Activated CD8-positive, alpha-beta T cell treated with anti-CD3 and anti-CD28 coated beads for 36 hours (primary cell): ENCODE measurements at regions of chr2 and their contacts with region 1.

Region 1: DNA sequence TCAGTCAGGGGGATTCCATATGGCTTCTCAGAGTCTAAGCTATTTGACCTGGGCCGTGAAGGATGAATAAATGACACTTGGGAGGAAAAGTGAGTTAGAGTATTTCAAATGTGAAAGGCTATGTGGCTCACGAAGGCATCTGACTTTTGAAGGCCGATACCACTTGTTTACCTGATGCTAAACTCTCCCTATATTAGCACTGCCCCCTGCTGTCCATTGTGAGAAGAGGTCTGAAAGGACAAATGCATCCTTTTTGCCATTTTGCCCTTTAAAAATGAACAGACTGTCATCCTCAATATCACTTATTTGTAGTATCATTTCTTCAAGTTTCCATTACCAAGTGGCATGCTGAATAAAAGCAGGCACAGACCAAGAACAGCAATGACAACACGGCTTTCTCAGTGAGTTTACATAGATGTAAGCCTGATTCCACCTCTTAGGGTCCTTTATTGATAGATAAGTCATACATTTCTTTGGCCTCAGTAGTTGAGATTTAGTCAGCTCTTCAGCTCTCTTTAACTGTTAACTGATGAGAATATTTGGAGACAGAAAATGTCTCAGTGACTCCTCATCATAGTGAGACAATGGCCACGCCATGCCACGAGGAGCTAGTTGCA is 40.1 kb downstream of the DOCK10 start:
- DNase-seq: peak; percentile 80
- ATAC-seq: peak; percentile 72
- H3K4me3 Mint-ChIP-seq: no peak overlapping the region
- H3K27ac Mint-ChIP-seq: peak overlapping the region; percentile 83
- H3K4me1 Mint-ChIP-seq: peaks cover 83% of the 10 kb centered on the region
- H3K27me3 Mint-ChIP-seq: no peaks in the 10 kb centered on the region
- CTCF ChIP-seq: peak; percentile 76

Region 2: GRCh38 chr2:224885836-224886547 is 116.2 kb before region 1 on chr2:
- CTCF ChIA-PET with region 1: interaction called, 3 read pairs
- POLR2A ChIA-PET with region 1: no interaction called
- intact Hi-C with region 1: loop called (anchors 5 kb)
- DNase-seq: no peak
- ATAC-seq: peak; percentile 70
- H3K4me3 Mint-ChIP-seq: no peak overlapping the region
- H3K27ac Mint-ChIP-seq: peak overlapping the region; percentile 67
- H3K4me1 Mint-ChIP-seq: peaks cover 69% of the 10 kb centered on the region
- H3K27me3 Mint-ChIP-seq: no peaks in the 10 kb centered on the region
- CTCF ChIP-seq: no peak

Region 3: GRCh38 chr2:224927646-224928173 is 74.4 kb before region 1 on chr2:
- CTCF ChIA-PET with region 1: interaction called, 26 read pairs
- POLR2A ChIA-PET with region 1: interaction called, 14 read pairs
- intact Hi-C with region 1: loop called (anchors 2 kb)
- DNase-seq: peak; percentile 88
- ATAC-seq: peak; percentile 64
- H3K4me3 Mint-ChIP-seq: peak overlapping the region; percentile 42
- H3K27ac Mint-ChIP-seq: peak overlapping the region; percentile 94
- H3K4me1 Mint-ChIP-seq: peaks cover 95% of the 10 kb centered on the region
- H3K27me3 Mint-ChIP-seq: no peaks in the 10 kb centered on the region
- CTCF ChIP-seq: no peak

Region 4: GRCh38 chr2:224938651-224939182 is 63.4 kb before region 1 on chr2:
- CTCF ChIA-PET with region 1: interaction called, 31 read pairs
- POLR2A ChIA-PET with region 1: interaction called, 9 read pairs
- intact Hi-C with region 1: no loop called
- DNase-seq: peak; percentile 71
- ATAC-seq: peak; percentile 79
- H3K4me3 Mint-ChIP-seq: peak overlapping the region; percentile 67
- H3K27ac Mint-ChIP-seq: peak overlapping the region; percentile 87
- H3K4me1 Mint-ChIP-seq: peaks cover 76% of the 10 kb centered on the region
- H3K27me3 Mint-ChIP-seq: no peaks in the 10 kb centered on the region
- CTCF ChIP-seq: no peak

Region 5: GRCh38 chr2:224982910-224983711 is 19.0 kb before region 1 on chr2:
- CTCF ChIA-PET with region 1: interaction called, 54 read pairs
- POLR2A ChIA-PET with region 1: interaction called, 4 read pairs
- intact Hi-C with region 1: no loop called
- DNase-seq: peak; percentile 59
- ATAC-seq: no peak
- H3K4me3 Mint-ChIP-seq: peak overlapping the region; percentile 59
- H3K27ac Mint-ChIP-seq: peak overlapping the region; percentile 89
- H3K4me1 Mint-ChIP-seq: peaks cover 85% of the 10 kb centered on the region
- H3K27me3 Mint-ChIP-seq: no peaks in the 10 kb centered on the region
- CTCF ChIP-seq: no peak

Region 6: DNA sequence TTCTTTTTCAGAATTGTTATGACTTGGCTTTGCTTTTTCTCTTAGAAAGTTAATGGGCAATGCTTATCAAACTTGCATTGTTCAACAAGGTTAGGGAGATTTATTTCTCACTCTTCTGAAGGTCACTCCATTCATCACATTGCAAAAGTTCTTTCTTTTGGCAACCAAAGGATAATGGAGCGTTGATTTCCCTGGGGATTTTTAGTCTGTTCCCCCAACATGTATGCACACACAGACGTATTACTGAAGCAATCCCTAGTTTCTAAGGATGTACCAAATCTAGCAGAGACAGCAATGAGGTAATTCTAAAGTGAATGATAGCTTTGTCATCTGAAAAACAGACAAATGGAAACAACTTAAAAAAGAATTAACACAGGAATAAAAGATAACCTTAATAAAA is 746.5 kb after region 1 on chr2:
- CTCF ChIA-PET with region 1: no interaction called
- POLR2A ChIA-PET with region 1: no interaction called
- intact Hi-C with region 1: no loop called
- DNase-seq: no peak
- ATAC-seq: no peak
- H3K4me3 Mint-ChIP-seq: no peak overlapping the region
- H3K27ac Mint-ChIP-seq: no peak overlapping the region
- H3K4me1 Mint-ChIP-seq: no peaks in the 10 kb centered on the region
- H3K27me3 Mint-ChIP-seq: no peaks in the 10 kb centered on the region
- CTCF ChIP-seq: no peak